Activated B cell treated with CpG ODN at 0.5 μM for 24 hours (primary cell): ENCODE measurements at regions of chr17 and their contacts with region 1.

Region 1: GRCh38 chr17:68356520-68356919 is 65.2 kb downstream of the ARSG start:
- DNase-seq: no peak
- ATAC-seq: peak; percentile 77
- H3K4me3 Mint-ChIP-seq: peak overlapping the region; percentile 9
- H3K27ac Mint-ChIP-seq: peak overlapping the region; percentile 24
- H3K4me1 Mint-ChIP-seq: peaks cover 15% of the 10 kb centered on the region
- H3K27me3 Mint-ChIP-seq: peaks cover 19% of the 10 kb centered on the region
- CTCF ChIP-seq: no peak

Region 2: DNA sequence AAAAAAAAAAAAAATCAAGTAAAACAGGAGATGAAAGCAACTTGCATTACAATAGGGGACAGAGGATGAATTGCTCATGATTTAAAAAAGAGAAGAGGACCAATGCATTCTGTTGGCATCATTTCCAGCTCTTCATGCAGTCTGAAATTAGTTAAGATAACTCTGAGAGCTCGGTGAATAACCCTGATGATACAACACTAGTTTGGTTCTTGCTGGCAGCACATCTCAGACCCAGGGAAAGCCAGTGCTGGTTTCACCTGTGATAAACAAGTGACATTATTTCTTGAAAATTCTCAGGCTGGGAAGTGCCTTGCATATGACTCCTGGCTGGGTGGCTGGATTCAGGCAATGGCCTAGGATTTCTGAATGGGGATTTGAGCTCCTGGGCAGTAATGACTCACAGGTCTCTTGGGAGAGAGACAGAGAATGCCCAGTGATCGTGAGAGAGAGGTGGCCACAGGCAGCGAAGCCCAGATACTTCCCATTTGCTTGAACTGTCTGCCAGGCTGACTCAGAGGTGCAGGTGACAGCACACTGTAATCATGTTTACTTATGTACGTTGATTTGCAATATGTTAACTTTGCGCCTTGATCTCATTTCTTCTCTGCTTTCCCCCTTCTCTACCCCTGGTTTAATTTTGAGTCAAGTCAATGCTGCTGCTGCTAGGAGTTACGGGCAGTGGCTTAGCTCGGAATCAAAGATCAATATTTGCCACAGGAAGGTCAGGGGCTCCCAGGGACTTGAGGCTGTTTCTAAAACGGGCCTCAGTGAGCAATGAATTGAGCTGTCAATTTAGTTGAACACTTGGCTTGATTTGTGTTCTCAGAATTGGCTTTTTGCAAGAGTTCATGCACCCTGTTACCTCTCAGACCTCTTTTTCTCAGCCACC is 38.2 kb before region 1 on chr17:
- CTCF ChIA-PET with region 1: no interaction called
- POLR2A ChIA-PET with region 1: no interaction called
- intact Hi-C with region 1: loop called (anchors 5 kb)
- DNase-seq: no peak
- ATAC-seq: no peak
- H3K4me3 Mint-ChIP-seq: no peak overlapping the region
- H3K27ac Mint-ChIP-seq: no peak overlapping the region
- H3K4me1 Mint-ChIP-seq: peaks cover 34% of the 10 kb centered on the region
- H3K27me3 Mint-ChIP-seq: peaks cover 3% of the 10 kb centered on the region
- CTCF ChIP-seq: no peak